Activated CD4-positive, alpha-beta T cell treated with anti-CD3 and anti-CD28 coated beads for 36 hours (primary cell): ENCODE measurements at regions of chr19 and their contacts with region 1.

Region 1: DNA sequence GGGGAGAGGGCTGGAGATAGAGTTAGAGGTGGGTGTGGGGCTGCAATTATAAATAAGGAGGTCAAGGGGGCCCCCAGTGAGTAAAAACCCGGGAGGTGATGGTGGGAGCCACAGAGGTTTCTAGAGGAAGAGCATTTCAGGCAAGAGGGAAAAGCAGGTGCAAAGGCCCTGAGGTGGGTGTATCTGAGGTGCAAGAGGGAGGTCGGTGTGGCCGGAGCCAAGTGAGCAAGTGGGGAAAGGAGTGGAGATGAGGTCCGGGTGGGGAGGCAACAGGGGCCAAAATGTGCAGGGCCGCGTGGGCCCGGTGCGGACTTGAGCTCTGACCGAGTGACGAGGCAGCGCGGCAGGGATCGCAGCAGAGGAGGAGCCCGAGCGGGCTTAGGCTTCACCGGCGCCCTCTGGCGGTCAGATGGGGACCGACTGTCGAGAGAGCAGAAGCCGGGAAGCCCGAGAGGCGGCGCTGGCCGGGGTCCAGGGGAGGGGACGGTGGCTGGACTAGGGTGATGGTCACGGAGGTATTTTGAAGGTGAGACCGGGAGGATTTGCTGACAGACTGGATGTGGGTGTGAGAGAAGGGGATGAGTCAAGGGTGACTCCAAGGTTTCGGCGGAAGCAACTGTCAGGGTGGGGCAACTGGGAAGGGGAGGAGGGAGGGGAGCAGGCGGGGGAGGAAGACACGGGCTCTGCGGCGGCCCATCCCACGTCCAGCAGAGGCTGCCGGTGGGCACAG is 17.7 kb upstream of the SPACA4 start:
- DNase-seq: peak; percentile 94
- ATAC-seq: peak; percentile 89
- H3K4me3 Mint-ChIP-seq: peak overlapping the region; percentile 35
- H3K27ac Mint-ChIP-seq: peak overlapping the region; percentile 43
- H3K4me1 Mint-ChIP-seq: peaks cover 15% of the 10 kb centered on the region
- H3K27me3 Mint-ChIP-seq: no peaks in the 10 kb centered on the region

Region 2: GRCh38 chr19:48308631-48309586 is 279.9 kb before region 1 on chr19:
- CTCF ChIA-PET with region 1: interaction called, 11 read pairs
- POLR2A ChIA-PET with region 1: no interaction called
- intact Hi-C with region 1: loop called in 1 of 2 experiments (anchors 1 kb)
- DNase-seq: no peak
- ATAC-seq: no peak
- H3K4me3 Mint-ChIP-seq: no peak overlapping the region
- H3K27ac Mint-ChIP-seq: no peak overlapping the region
- H3K4me1 Mint-ChIP-seq: no peaks in the 10 kb centered on the region
- H3K27me3 Mint-ChIP-seq: no peaks in the 10 kb centered on the region

Region 3: GRCh38 chr19:48398375-48399235 is 190.2 kb before region 1 on chr19:
- CTCF ChIA-PET with region 1: no interaction called
- POLR2A ChIA-PET with region 1: no interaction called
- intact Hi-C with region 1: loop called in 1 of 2 experiments (anchors 5 kb)
- DNase-seq: peak; percentile 94
- ATAC-seq: peak; percentile 68
- H3K4me3 Mint-ChIP-seq: peak overlapping the region; percentile 83
- H3K27ac Mint-ChIP-seq: no peak overlapping the region
- H3K4me1 Mint-ChIP-seq: peaks cover 29% of the 10 kb centered on the region
- H3K27me3 Mint-ChIP-seq: peaks cover 31% of the 10 kb centered on the region

Region 4: GRCh38 chr19:48608798-48609263 is 20.0 kb after region 1 on chr19:
- CTCF ChIA-PET with region 1: interaction called, 10 read pairs
- POLR2A ChIA-PET with region 1: no interaction called
- intact Hi-C with region 1: no loop called
- DNase-seq: peak; percentile 74
- ATAC-seq: peak; percentile 86
- H3K4me3 Mint-ChIP-seq: no peak overlapping the region
- H3K27ac Mint-ChIP-seq: no peak overlapping the region
- H3K4me1 Mint-ChIP-seq: peaks cover 3% of the 10 kb centered on the region
- H3K27me3 Mint-ChIP-seq: no peaks in the 10 kb centered on the region

Region 5: DNA sequence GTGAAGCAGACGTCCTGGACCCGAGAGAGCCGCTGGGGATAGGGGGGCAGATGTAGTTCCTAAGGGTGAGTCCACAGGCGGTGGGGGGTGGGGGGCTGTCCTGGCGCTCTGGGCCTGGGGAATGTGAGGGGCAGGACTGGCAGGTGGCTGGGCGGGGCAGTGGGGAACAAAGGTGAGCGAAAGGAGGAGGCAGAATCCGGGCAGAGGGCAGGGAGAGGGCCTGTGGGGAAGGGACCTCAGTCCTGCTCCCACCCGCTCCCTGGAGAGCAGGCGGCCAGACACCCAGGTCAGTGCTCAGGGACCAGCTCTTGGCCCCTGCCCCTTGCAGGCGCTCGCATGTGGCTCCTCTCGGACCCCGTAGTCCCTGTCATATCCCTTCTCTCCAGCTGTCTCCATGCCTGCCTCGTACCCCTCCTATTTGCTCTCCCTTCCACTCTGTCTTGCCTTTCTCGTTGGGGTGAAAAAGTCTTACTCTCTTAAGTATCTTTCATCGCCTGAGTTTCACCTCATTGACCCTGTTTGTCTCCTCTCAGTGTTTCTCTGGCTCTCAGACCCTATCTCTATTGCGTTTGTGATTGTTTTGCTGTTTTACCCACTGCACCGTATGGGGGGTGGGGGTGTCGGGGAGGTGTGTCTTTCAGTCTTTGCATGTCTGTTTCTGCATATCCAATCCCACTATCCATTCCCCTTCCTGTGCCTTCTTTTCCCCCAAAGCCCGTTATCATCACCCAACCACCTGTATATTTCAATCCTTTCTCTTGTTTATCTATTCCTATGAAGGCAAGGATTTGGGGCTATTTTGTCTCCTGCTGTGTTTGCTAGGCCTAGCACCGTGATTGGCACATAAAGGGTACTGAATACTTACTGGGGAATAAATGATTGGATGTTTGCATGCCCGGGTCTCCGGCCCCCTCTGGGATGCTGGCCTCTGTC is 36.2 kb after region 1 on chr19:
- CTCF ChIA-PET with region 1: no interaction called
- POLR2A ChIA-PET with region 1: no interaction called
- intact Hi-C with region 1: no loop called
- DNase-seq: no peak
- ATAC-seq: no peak
- H3K4me3 Mint-ChIP-seq: peak overlapping the region; percentile 73
- H3K27ac Mint-ChIP-seq: peak overlapping the region; percentile 74
- H3K4me1 Mint-ChIP-seq: peaks cover 38% of the 10 kb centered on the region
- H3K27me3 Mint-ChIP-seq: no peaks in the 10 kb centered on the region

Region 6: GRCh38 chr19:48660854-48661731 is 72.3 kb after region 1 on chr19:
- CTCF ChIA-PET with region 1: no interaction called
- POLR2A ChIA-PET with region 1: no interaction called
- intact Hi-C with region 1: loop called in 1 of 2 experiments (anchors 2 kb)
- DNase-seq: peak; percentile 88
- ATAC-seq: peak; percentile 94
- H3K4me3 Mint-ChIP-seq: peak overlapping the region; percentile 10
- H3K27ac Mint-ChIP-seq: peak overlapping the region; percentile 94
- H3K4me1 Mint-ChIP-seq: peaks cover 7% of the 10 kb centered on the region
- H3K27me3 Mint-ChIP-seq: no peaks in the 10 kb centered on the region

Region 7: GRCh38 chr19:48993175-48994034 is 404.6 kb after region 1 on chr19 and contains the starts of genes GYS1 and RUVBL2:
- CTCF ChIA-PET with region 1: no interaction called
- POLR2A ChIA-PET with region 1: no interaction called
- intact Hi-C with region 1: no loop called
- DNase-seq: peak; percentile 100
- ATAC-seq: peak; percentile 95
- H3K4me3 Mint-ChIP-seq: peak within 1 kb of the TSS; percentile 100
- H3K27ac Mint-ChIP-seq: peak within 1 kb of the TSS; percentile 97
- H3K4me1 Mint-ChIP-seq: peaks cover 41% of the 10 kb centered on the region
- H3K27me3 Mint-ChIP-seq: no peaks in the 10 kb centered on the region
- total RNA-seq, gene GYS1: 80.2 to 102 TPM
- total RNA-seq, gene RUVBL2: 155 to 178 TPM